ENCODE measurements at regions of chr1 and their contacts with region 1.

Region 1: DNA sequence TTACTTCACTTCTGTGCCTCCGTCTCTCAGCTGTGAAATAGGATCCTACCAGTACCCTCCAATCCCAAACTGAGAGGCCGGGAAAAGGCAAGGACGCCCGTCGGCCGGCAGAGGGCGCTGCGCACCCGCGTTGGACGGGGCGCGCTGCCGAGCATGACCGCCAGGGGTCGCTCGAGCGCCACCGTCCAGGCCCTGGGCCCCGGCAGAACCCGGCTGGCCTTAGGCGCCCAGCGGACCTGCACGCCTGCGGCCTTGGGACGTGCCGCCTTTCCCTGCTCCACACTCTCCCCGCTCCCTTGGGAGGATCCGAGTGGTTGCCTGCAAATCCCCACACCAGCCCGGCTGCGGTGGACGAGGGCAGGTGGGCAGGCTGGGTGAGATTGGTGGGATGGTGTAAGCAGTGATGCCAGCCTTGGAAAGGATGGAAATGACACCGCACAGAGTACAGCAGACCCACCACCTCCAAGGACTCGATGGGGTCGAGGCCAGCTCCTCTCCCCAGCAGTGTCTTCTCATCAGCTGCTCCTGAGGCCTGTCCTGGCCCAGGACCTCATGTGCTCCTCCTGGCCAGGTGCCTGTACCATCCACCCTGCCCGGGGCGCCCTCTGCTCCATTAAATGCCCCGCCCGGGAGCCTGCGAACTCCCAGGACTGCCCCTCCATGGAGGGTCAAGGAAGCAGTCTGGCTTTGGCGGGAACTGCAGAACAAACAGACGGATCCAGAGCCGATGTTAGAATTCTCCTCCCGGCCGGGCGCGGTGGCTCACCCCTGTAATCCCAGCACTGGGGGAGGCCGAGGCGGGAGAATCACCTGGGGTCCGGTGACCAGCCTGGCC is 47.4 kb upstream of the LBR start:
- DNase-seq: peak; percentile 58
- ATAC-seq: peak; percentile 80
- H3K4me3 Mint-ChIP-seq: no peak overlapping the region
- H3K27ac Mint-ChIP-seq: no peak overlapping the region
- H3K4me1 Mint-ChIP-seq: peaks cover 41% of the 10 kb centered on the region
- H3K27me3 Mint-ChIP-seq: no peaks in the 10 kb centered on the region
- CTCF ChIP-seq: peak; percentile 100

Region 2: GRCh38 chr1:225460737-225461562 is 14.3 kb before region 1 on chr1:
- CTCF ChIA-PET with region 1: interaction called, 18 read pairs
- POLR2A ChIA-PET with region 1: interaction called, 3 read pairs
- intact Hi-C with region 1: no loop called
- DNase-seq: peak; percentile 83
- ATAC-seq: peak; percentile 94
- H3K4me3 Mint-ChIP-seq: no peak overlapping the region
- H3K27ac Mint-ChIP-seq: peak overlapping the region; percentile 53
- H3K4me1 Mint-ChIP-seq: peaks cover 35% of the 10 kb centered on the region
- H3K27me3 Mint-ChIP-seq: no peaks in the 10 kb centered on the region
- CTCF ChIP-seq: no peak

Region 3: DNA sequence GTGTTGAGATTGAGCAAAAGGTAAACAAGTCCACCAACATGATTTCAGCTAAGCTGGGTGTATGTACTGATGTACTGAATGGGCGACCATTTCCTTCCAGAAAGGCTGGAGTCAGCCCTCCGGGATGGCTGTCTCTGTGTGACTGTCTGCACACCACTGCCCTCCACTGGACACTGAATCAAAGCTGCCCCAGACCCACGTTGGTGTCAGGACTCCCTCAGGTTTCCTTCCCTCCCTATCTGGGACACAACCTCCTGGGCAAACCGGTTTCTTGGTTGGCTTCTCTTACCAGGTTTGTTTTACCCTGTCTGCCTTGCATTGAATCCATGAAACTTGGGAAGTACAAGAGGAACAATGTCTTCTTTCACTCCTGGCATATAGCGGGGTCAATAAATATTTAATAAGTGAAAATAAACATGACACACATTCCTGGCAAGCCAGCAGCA is 297.1 kb after region 1 on chr1:
- CTCF ChIA-PET with region 1: interaction called, 25 read pairs
- POLR2A ChIA-PET with region 1: interaction called, 15 read pairs
- intact Hi-C with region 1: loop called (anchors 5 kb)
- DNase-seq: peak; percentile 61
- ATAC-seq: peak; percentile 67
- H3K4me3 Mint-ChIP-seq: no peak overlapping the region
- H3K27ac Mint-ChIP-seq: no peak overlapping the region
- H3K4me1 Mint-ChIP-seq: peaks cover 2% of the 10 kb centered on the region
- H3K27me3 Mint-ChIP-seq: no peaks in the 10 kb centered on the region
- CTCF ChIP-seq: peak; percentile 39

Region 4: GRCh38 chr1:225977937-225978748 is 502.9 kb after region 1 on chr1:
- CTCF ChIA-PET with region 1: interaction called, 16 read pairs
- POLR2A ChIA-PET with region 1: no interaction called
- intact Hi-C with region 1: loop called (anchors 2 kb)
- DNase-seq: no peak
- ATAC-seq: no peak
- H3K4me3 Mint-ChIP-seq: no peak overlapping the region
- H3K27ac Mint-ChIP-seq: peak overlapping the region; percentile 10
- H3K4me1 Mint-ChIP-seq: peaks cover 11% of the 10 kb centered on the region
- H3K27me3 Mint-ChIP-seq: no peaks in the 10 kb centered on the region
- CTCF ChIP-seq: no peak